CD8-positive, alpha-beta T cell (primary cell): ENCODE measurements at regions of chr4 and their contacts with region 1.

Region 1: DNA sequence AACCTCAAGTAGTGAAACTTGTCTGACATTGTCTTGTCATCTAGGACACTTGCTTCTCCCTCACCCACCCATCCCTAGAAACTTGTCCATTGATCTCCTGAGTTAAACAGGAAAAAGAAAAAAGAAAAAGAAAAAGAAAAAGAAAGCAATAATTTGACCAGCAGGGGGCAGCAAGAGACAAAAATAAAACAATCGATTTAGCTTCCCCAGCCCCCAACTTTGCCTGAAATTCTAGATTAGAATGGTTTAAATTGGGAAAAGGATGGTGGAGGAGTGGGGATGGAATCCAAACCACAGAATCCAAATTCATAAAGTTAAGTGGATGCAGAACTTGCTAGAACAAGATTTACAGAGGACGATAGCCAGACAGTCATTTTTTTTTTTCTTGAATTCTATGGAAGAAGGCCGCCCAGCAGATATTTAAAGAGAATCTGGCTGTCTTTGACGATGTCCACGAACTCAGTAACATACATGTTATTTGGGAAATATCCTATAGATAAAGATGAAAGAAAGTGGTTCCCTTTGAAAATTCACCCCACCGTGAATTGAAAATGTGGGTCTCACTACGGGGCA is 282.9 kb downstream of the USP46 start:
- DNase-seq: peak in 2 of 9 experiments; percentile 33 to 39
- ATAC-seq: no peak
- H3K4me3 ChIP-seq: no peak overlapping the region
- H3K4me3 Mint-ChIP-seq: no peak overlapping the region
- H3K27ac ChIP-seq: no peak overlapping the region
- H3K27ac Mint-ChIP-seq: no peak overlapping the region
- H3K4me1 ChIP-seq: no peaks in the 10 kb centered on the region
- H3K4me1 Mint-ChIP-seq: no peaks in the 10 kb centered on the region
- H3K27me3 ChIP-seq: no peaks in the 10 kb centered on the region
- H3K27me3 Mint-ChIP-seq: peaks cover 7% of the 10 kb centered on the region
- CTCF ChIP-seq: peak; percentile 71

Region 2: DNA sequence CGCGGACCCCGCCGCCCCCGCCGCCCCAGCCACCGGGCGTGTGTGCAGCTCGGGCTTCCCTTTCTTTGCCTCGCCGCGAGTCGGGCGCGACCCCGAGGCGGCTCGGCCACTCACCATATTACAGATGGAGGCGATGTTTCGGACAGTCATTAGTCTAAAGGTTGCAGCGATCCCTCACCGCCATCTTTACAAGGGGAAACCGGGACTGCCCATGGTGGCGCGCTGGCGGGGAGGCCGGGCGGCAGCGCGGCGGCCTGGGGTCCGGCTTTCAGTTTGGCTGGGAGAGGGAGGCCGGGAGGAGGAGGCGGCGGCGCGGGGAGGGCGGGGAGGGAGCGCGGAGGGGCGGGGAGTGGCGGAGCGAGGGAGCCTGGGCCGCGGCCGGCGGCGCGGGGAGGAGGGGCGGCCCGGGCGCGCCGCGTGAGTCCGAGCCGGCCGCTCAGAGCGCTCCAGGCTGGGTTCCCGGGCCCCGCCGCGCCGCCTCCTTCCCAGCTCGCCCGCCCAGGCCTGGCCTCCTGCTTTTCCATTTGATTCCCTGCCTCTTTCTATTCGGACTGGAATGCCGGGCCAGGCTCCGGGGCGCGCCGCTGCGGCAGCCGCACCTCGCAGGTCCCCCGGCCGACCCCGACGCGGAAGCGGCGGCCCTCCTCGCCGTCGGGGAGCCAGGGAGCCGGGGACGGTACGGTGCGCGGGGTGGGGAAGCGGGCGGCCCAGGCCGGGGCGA is 282.9 kb after region 1 on chr4 and contains the start of gene USP46:
- CTCF ChIA-PET with region 1: no interaction called
- POLR2A ChIA-PET with region 1: no interaction called
- intact Hi-C with region 1: loop called in 1 of 2 experiments (anchors 10 kb)
- DNase-seq: peak in 8 of 9 experiments; percentile 25 to 70 (median 42)
- ATAC-seq: peak; percentile 77
- H3K4me3 ChIP-seq: peak within 1 kb of the TSS; percentile 66 to 67
- H3K4me3 Mint-ChIP-seq: peak within 1 kb of the TSS; percentile 82
- H3K27ac ChIP-seq: peak within 1 kb of the TSS in 1 of 2 experiments; percentile 22
- H3K27ac Mint-ChIP-seq: peak within 1 kb of the TSS; percentile 76
- H3K4me1 ChIP-seq: no peaks in the 10 kb centered on the region
- H3K4me1 Mint-ChIP-seq: peaks cover 21% of the 10 kb centered on the region
- H3K27me3 ChIP-seq: no peaks in the 10 kb centered on the region
- H3K27me3 Mint-ChIP-seq: peaks cover 31% of the 10 kb centered on the region
- CTCF ChIP-seq: no peak
- total RNA-seq, gene USP46: 3.1 to 4.5 TPM

Region 3: DNA sequence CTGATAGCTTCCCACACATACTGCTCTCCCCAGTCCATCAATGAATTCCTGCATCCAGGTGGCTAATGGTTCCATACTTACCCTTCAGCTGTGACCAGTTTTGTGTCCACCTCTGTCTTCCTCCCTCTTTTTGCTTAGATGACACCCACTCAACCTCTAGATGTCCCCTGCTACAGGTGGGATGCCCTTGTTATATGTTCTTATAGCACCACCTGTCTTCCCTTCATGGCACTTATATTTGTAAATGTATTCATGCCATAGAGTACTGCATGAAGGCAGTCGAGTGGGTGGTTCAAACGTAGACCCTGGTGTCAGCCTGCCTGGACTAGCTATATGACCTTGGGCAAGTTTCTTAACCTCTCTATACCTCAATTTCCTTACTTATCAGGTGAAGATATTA is 289.4 kb after region 1 on chr4:
- CTCF ChIA-PET with region 1: no interaction called
- POLR2A ChIA-PET with region 1: no interaction called
- intact Hi-C with region 1: loop called (anchors 5 to 10 kb)
- DNase-seq: peak in 2 of 9 experiments; percentile 36 to 50
- ATAC-seq: peak; percentile 34
- H3K4me3 ChIP-seq: no peak overlapping the region
- H3K4me3 Mint-ChIP-seq: no peak overlapping the region
- H3K27ac ChIP-seq: no peak overlapping the region
- H3K27ac Mint-ChIP-seq: no peak overlapping the region
- H3K4me1 ChIP-seq: no peaks in the 10 kb centered on the region
- H3K4me1 Mint-ChIP-seq: peaks cover 2% of the 10 kb centered on the region
- H3K27me3 ChIP-seq: no peaks in the 10 kb centered on the region
- H3K27me3 Mint-ChIP-seq: peaks cover 38% of the 10 kb centered on the region
- CTCF ChIP-seq: no peak

Region 4: GRCh38 chr4:52676536-52676935 is 300.3 kb after region 1 on chr4:
- CTCF ChIA-PET with region 1: no interaction called
- POLR2A ChIA-PET with region 1: no interaction called
- intact Hi-C with region 1: no loop called
- DNase-seq: no peak
- ATAC-seq: no peak
- H3K4me3 ChIP-seq: no peak overlapping the region
- H3K4me3 Mint-ChIP-seq: no peak overlapping the region
- H3K27ac ChIP-seq: no peak overlapping the region
- H3K27ac Mint-ChIP-seq: no peak overlapping the region
- H3K4me1 ChIP-seq: no peaks in the 10 kb centered on the region
- H3K4me1 Mint-ChIP-seq: no peaks in the 10 kb centered on the region
- H3K27me3 ChIP-seq: no peaks in the 10 kb centered on the region
- H3K27me3 Mint-ChIP-seq: peaks cover 15% of the 10 kb centered on the region
- CTCF ChIP-seq: no peak

Region 5: GRCh38 chr4:52983563-52984303 is 607.5 kb after region 1 on chr4:
- CTCF ChIA-PET with region 1: interaction called, 18 read pairs
- POLR2A ChIA-PET with region 1: no interaction called
- intact Hi-C with region 1: loop called in 1 of 2 experiments (anchors 1 kb)
- DNase-seq: peak in 2 of 9 experiments; percentile 47 to 61
- ATAC-seq: no peak
- H3K4me3 ChIP-seq: no peak overlapping the region
- H3K4me3 Mint-ChIP-seq: no peak overlapping the region
- H3K27ac ChIP-seq: no peak overlapping the region
- H3K27ac Mint-ChIP-seq: no peak overlapping the region
- H3K4me1 ChIP-seq: no peaks in the 10 kb centered on the region
- H3K4me1 Mint-ChIP-seq: peaks cover 4% of the 10 kb centered on the region
- H3K27me3 ChIP-seq: no peaks in the 10 kb centered on the region
- H3K27me3 Mint-ChIP-seq: no peaks in the 10 kb centered on the region
- CTCF ChIP-seq: peak; percentile 65

Region 6: DNA sequence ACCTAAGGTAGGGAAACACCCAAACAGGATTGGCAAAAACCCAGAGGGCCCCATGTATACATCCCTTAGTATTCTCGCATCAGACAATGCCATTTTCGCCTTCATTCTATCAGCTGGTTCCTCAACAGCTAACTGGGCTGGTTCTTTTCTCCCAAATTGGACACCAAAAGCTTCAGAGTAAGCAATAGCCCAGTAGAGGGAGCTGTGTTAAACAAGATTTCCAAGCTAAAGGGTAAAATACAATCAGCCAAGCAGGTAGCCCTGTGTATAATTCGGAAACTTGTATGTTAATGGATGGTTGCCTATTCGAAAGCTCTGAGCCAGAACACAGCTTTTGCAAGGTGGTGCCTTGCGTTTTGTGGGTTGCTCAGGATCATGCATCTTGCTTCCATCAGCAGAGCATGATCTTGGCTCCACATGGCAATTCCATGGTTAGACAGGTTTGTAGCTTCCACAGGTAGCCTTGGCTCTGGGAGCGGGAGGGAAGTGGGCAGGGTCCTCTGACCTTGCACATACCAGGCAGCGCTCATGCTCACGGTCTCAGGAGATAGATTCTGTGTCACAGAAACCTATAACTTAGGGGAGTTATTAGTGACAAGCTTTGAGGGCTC is 1330.3 kb after region 1 on chr4:
- CTCF ChIA-PET with region 1: no interaction called
- POLR2A ChIA-PET with region 1: no interaction called
- intact Hi-C with region 1: no loop called
- DNase-seq: peak in 1 of 9 experiments; percentile 10
- ATAC-seq: no peak
- H3K4me3 ChIP-seq: no peak overlapping the region
- H3K4me3 Mint-ChIP-seq: no peak overlapping the region
- H3K27ac ChIP-seq: no peak overlapping the region
- H3K27ac Mint-ChIP-seq: no peak overlapping the region
- H3K4me1 ChIP-seq: no peaks in the 10 kb centered on the region
- H3K4me1 Mint-ChIP-seq: peaks cover 12% of the 10 kb centered on the region
- H3K27me3 ChIP-seq: no peaks in the 10 kb centered on the region
- H3K27me3 Mint-ChIP-seq: peaks cover 15% of the 10 kb centered on the region
- CTCF ChIP-seq: no peak

Region 7: GRCh38 chr4:53929955-53930798 is 1554.0 kb after region 1 on chr4:
- CTCF ChIA-PET with region 1: interaction called, 3 read pairs
- POLR2A ChIA-PET with region 1: no interaction called
- intact Hi-C with region 1: loop called in 1 of 2 experiments (anchors 5 kb)
- DNase-seq: peak; percentile 26 to 75 (median 60)
- ATAC-seq: peak; percentile 55
- H3K4me3 ChIP-seq: no peak overlapping the region
- H3K4me3 Mint-ChIP-seq: no peak overlapping the region
- H3K27ac ChIP-seq: no peak overlapping the region
- H3K27ac Mint-ChIP-seq: no peak overlapping the region
- H3K4me1 ChIP-seq: no peaks in the 10 kb centered on the region
- H3K4me1 Mint-ChIP-seq: no peaks in the 10 kb centered on the region
- H3K27me3 ChIP-seq: peaks cover 0 to 4% of the 10 kb centered on the region in 2 experiments
- H3K27me3 Mint-ChIP-seq: peaks cover 10% of the 10 kb centered on the region
- CTCF ChIP-seq: peak; percentile 75